GM12878 (cell line): ENCODE measurements at regions of chr14 and their contacts with region 1.

Region 1: DNA sequence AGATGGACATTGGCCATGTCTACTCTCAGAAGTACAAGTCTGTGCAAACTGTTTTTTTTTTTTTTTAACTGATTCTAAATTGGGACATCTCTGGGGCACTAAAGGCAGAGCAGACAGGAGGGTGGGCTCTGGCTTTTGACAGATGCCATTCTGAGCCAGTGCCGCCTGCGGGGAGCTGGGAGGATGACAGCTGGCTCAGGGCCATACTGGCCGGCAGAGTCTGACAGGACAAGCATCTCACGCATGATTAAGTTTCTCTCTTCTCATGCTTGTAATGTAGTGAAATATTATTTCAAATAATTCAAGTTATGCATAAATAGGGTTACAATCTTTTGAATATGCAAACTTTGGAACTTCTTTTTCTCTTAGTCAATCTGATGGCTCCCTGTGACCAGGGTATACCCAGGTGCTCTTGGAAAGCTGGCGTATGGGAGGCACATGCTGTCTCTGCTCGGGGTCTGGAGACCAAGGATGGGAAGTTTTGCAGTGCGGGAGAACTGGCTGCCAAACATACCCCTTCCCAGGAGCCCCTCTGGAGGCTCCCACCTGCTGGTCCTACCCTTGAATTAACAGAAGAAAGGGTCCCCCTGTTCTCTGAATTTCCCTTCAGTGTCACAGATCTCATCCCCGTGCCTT is 7.6 kb downstream of the CDCA4 start:
- DNase-seq: no peak
- ATAC-seq: peak; percentile 67
- H3K4me3 ChIP-seq: 0 out of 2 replicates have a peak overlapping the region, but pooled peaks have one; percentile 3
- H3K27ac ChIP-seq: no peak overlapping the region
- H3K4me1 ChIP-seq: peaks cover 20% of the 10 kb centered on the region
- H3K27me3 ChIP-seq: no peaks in the 10 kb centered on the region
- CTCF ChIP-seq: peak in 1 of 3 experiments; percentile 14; a peak in 1 of 6 replicates
- EP300 ChIP-seq: no peak
- POLR2A ChIP-seq: no peak
- RAD21 ChIP-seq: no peak

Region 2: GRCh38 chr14:105026803-105027563 is 13.7 kb after region 1 on chr14:
- CTCF ChIA-PET with region 1: interaction called, 3 read pairs
- POLR2A ChIA-PET with region 1: interaction called, 14 read pairs
- RAD21 ChIA-PET with region 1: interaction called, 3 read pairs
- SMC1A ChIA-PET with region 1: interaction called, 5 read pairs
- in situ Hi-C with region 1: no loop called
- intact Hi-C with region 1: no loop called
- DNase-seq: no peak
- ATAC-seq: peak; percentile 49
- H3K4me3 ChIP-seq: no peak overlapping the region
- H3K27ac ChIP-seq: peak overlapping the region; percentile 84
- H3K4me1 ChIP-seq: peaks cover 21% of the 10 kb centered on the region
- H3K27me3 ChIP-seq: no peaks in the 10 kb centered on the region
- CTCF ChIP-seq: no peak
- EP300 ChIP-seq: no peak
- POLR2A ChIP-seq: no peak
- RAD21 ChIP-seq: no peak